Left colon (tissue), 2 donors: ENCODE measurements at regions of chr1 and their contacts with region 1.

Region 1: DNA sequence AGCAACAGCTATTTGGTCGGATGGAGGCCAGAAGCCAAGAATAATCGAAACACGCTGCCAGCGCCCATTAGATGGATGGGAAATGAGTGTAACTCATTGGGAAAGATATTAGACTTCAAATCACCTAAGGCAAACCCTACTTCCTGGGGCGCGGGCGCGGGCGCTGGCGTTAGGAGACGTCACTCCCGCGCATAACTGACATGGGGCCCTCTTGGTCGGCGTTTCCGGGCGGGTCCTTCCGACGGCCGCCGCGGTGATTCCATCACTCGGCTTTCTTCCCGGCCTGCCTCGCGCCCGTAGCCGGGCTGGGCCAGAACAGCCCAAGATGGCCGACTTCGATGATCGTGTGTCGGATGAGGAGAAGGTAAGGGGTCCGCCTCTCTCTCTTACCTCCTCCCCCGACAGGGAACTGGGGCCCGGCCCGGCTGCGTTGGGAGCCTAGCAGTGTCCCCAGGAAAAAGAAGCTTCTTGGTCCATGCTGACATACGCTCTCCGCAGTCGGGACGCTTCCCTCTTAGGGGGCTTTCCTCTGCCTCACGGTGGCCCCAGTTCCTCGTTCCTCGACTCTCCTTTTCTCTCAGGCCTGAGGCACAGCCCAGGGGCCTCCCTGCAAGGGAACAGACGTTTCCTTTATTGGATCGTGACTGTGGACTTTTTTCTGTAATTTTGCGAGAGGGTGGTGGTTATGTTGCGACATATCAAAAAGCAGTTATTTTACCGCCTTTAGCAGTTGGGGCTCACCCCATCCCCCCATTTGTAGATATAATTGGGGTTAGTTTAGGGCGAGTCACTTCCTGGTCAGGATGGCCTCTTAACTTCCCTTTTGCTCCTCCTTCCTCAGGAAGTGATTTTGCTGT is at the start of gene CAPZA1:
- DNase-seq: peak; percentile 94
- ATAC-seq: peak; percentile 90
- total RNA-seq, gene CAPZA1: 161 to 162 TPM

Region 2: DNA sequence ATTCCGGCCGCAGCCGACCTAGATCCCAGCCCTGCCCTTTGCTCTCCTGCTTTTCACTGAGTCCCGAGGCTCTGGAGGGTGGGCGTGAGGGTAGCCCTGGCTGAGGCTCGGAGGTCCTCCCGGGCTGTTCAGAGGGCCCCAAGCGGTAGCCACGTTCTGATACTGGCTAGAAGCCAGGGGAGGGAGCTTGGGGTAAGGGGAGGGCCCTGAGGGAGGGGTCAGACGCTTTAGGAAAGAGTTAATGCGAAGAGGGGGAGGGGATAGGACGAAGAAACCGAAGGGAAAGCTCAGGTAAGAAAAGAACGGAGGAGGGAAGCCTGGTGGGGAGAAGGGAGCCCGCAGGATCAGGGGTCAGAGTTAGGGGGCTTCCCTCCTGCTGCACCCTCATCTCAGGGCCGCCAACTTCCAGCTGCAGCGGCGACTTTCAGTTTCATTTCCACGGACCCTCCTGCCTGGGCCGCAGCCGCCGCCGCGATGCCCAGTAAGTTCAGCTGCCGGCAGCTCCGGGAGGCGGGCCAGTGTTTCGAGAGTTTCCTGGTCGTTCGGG is 54.8 kb after region 1 on chr1 and contains the start of gene MOV10:
- intact Hi-C with region 1: loop called in 1 of 2 experiments (anchors 10 kb)
- DNase-seq: peak; percentile 71 to 83
- ATAC-seq: peak; percentile 77
- total RNA-seq, gene MOV10: 63.6 to 88.0 TPM

Region 3: DNA sequence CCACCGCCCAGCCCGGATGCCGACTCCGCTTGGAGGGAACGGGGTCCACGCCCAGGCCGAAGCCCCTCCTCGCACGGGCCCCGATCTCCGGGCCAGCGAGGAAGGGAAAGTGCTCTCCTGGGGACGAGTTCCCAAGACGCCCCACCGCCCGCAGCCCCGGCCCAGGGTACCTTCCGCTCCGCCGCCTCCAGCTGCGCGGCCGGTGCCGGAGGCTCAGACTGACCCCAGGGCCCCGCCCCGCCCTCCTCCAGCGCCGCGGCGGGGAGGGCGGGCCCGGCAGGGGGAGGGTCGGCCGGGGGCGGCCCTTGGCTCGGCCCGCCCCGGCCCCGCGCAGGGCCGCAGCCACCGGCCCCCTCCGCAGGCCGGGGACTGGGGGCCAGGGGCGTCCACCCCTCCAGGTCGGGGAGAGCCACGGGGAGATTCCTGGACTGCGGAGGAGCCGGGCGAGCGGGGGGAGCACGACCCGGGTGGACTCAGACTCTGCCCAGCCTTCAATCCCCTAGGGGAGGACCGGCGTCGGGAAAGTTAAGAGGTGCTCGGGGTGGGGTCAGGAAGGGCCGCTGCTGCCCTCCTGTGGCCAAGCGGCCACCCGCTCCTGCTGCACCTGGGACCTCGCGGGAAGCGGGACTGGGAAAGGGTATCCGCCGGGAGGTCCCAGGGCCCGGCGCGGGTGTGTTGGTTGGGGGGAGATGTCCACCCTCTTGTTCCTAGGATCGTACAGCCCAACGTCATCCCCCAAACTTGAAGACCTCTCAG is 87.3 kb after region 1 on chr1 and contains the start of gene RHOC:
- intact Hi-C with region 1: loop called in 1 of 2 experiments (anchors 5 kb)
- DNase-seq: peak; percentile 89 to 90
- ATAC-seq: peak; percentile 69
- total RNA-seq, gene RHOC: 466 to 701 TPM